ENCODE measurements at regions of chr11 and their contacts with region 1.

Region 1: GRCh38 chr11:63888170-63889086 is 28.5 kb downstream of the RCOR2 start:
- DNase-seq: peak; percentile 70 to 83 (median 75)
- H3K4me3 ChIP-seq: peak overlapping the region; percentile 76 to 92
- H3K4me3 Mint-ChIP-seq: peak overlapping the region; percentile 90 to 99 (median 96)
- H3K27ac ChIP-seq: peak overlapping the region; percentile 69
- H3K27ac Mint-ChIP-seq: peak overlapping the region; percentile 94 to 99 (median 97)
- H3K4me1 ChIP-seq: peaks cover 81% of the 10 kb centered on the region
- H3K4me1 Mint-ChIP-seq: peaks cover 56 to 81% (median 69%) of the 10 kb centered on the region in 4 donors
- H3K27me3 ChIP-seq: no peaks in the 10 kb centered on the region
- H3K27me3 Mint-ChIP-seq: no peaks in the 10 kb centered on the region

Region 2: GRCh38 chr11:63855975-63856749 is 32.3 kb before region 1 on chr11:
- CTCF ChIA-PET with region 1: interaction called, 4 read pairs
- POLR2A ChIA-PET with region 1: interaction called, 16 read pairs
- intact Hi-C with region 1: no loop called
- DNase-seq: no peak
- H3K4me3 ChIP-seq: no peak overlapping the region
- H3K4me3 Mint-ChIP-seq: peak overlapping the region in 5 of 8 donors; percentile 7 to 35 (median 13)
- H3K27ac ChIP-seq: no peak overlapping the region
- H3K27ac Mint-ChIP-seq: peak overlapping the region in 5 of 7 donors; percentile 24 to 91 (median 47)
- H3K4me1 ChIP-seq: peaks cover 62% of the 10 kb centered on the region
- H3K4me1 Mint-ChIP-seq: peaks cover 33 to 67% (median 48%) of the 10 kb centered on the region in 4 donors
- H3K27me3 ChIP-seq: no peaks in the 10 kb centered on the region
- H3K27me3 Mint-ChIP-seq: no peaks in the 10 kb centered on the region

Region 3: DNA sequence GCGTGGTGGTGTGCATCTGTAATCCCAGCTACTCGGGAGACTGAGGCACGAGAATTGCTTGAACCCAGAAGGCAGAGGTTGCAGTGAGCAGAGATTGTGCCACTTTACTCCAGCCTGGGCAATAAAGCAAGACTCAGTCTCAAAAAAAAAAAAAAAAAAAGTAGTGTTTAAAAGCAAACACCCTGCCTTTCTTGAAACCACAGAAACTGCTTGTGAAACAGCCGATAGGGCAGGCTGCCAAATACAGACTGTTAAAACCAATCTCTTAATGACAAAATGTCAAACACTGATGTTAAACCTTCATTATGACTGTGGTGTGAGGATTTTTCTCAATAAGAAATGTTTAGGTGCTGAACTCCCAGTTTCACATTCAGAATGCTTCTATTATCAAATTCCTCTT is 22.2 kb before region 1 on chr11:
- CTCF ChIA-PET with region 1: interaction called, 12 read pairs
- POLR2A ChIA-PET with region 1: interaction called, 20 read pairs
- intact Hi-C with region 1: loop called (anchors 1 kb)
- DNase-seq: peak; percentile 76 to 88 (median 82)
- H3K4me3 ChIP-seq: no peak overlapping the region
- H3K4me3 Mint-ChIP-seq: peak overlapping the region; percentile 4 to 79 (median 66)
- H3K27ac ChIP-seq: peak overlapping the region; percentile 30
- H3K27ac Mint-ChIP-seq: peak overlapping the region; percentile 81 to 92 (median 85)
- H3K4me1 ChIP-seq: peaks cover 81% of the 10 kb centered on the region
- H3K4me1 Mint-ChIP-seq: peaks cover 59 to 83% (median 75%) of the 10 kb centered on the region in 4 donors
- H3K27me3 ChIP-seq: no peaks in the 10 kb centered on the region
- H3K27me3 Mint-ChIP-seq: no peaks in the 10 kb centered on the region

Region 4: GRCh38 chr11:63871962-63872799 is 16.2 kb before region 1 on chr11:
- CTCF ChIA-PET with region 1: interaction called, 12 read pairs
- POLR2A ChIA-PET with region 1: interaction called, 20 read pairs
- intact Hi-C with region 1: no loop called
- DNase-seq: peak in 2 of 5 donors; percentile 43 to 60
- H3K4me3 ChIP-seq: no peak overlapping the region
- H3K4me3 Mint-ChIP-seq: peak overlapping the region in 7 of 8 donors; percentile 36 to 76 (median 46)
- H3K27ac ChIP-seq: peak overlapping the region; percentile 2
- H3K27ac Mint-ChIP-seq: peak overlapping the region in 6 of 7 donors; percentile 12 to 89 (median 44)
- H3K4me1 ChIP-seq: peaks cover 87% of the 10 kb centered on the region
- H3K4me1 Mint-ChIP-seq: peaks cover 47 to 82% (median 68%) of the 10 kb centered on the region in 4 donors
- H3K27me3 ChIP-seq: no peaks in the 10 kb centered on the region
- H3K27me3 Mint-ChIP-seq: no peaks in the 10 kb centered on the region

Region 5: GRCh38 chr11:63931045-63931444 is 42.6 kb after region 1 on chr11:
- CTCF ChIA-PET with region 1: no interaction called
- POLR2A ChIA-PET with region 1: no interaction called
- intact Hi-C with region 1: no loop called
- DNase-seq: no peak
- H3K4me3 ChIP-seq: no peak overlapping the region
- H3K4me3 Mint-ChIP-seq: no peak overlapping the region
- H3K27ac ChIP-seq: no peak overlapping the region
- H3K27ac Mint-ChIP-seq: peak overlapping the region in 1 of 7 donors; percentile 77
- H3K4me1 ChIP-seq: no peaks in the 10 kb centered on the region
- H3K4me1 Mint-ChIP-seq: peaks cover 0 to 2% (median 0%) of the 10 kb centered on the region in 4 donors
- H3K27me3 ChIP-seq: no peaks in the 10 kb centered on the region
- H3K27me3 Mint-ChIP-seq: peaks cover 0 to 2% of the 10 kb centered on the region in 2 donors

Measured in CD4-positive, alpha-beta memory T cell (primary cell).